ENCODE measurements at regions of chr6 and their contacts with region 1.

Region 1: DNA sequence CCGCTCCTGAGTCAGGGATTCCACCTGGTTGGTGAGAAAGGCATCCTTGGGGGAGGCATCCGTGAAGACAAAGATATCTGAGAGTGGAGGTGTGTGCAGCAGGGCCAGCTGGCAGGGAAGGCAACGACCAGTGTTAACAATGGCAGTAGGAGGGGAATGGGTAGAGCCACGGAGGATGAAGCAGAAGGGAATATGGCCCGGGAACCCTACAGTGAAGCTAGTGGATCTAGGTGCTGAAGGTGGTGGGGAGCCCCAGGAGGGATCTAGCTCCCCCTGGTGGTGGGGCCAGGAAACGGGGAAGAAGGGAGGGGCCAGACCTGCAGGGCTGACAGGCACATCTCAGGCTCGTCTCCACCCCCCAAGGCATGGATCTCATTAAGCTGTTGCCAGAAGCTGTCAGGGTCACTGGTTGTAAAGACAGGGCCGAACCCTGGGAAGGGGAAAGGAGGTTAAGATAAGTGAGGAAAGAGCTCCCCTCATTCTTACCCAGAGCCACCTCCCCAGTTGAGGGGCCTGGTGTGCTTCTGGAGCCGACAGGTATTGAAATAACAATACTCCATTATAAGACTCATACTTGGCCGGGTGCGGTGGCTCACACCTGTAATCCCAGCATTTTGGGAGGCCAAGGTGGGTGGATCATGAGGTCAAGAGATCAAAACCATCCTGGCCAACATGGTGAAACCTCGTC is 7.3 kb downstream of the VWA7 start:
- DNase-seq: peak; percentile 83 to 89 (median 88)
- ATAC-seq: peak; percentile 85 to 87 (median 87)
- H3K4me3 ChIP-seq: no peak overlapping the region
- H3K27ac ChIP-seq: no peak overlapping the region
- H3K4me1 ChIP-seq: peaks cover 0 to 5% (median 0%) of the 10 kb centered on the region in 4 donors
- H3K27me3 ChIP-seq: no peaks in the 10 kb centered on the region
- CTCF ChIP-seq: peak; percentile 81 to 98 (median 94)
- POLR2A ChIP-seq: no peak

Region 2: DNA sequence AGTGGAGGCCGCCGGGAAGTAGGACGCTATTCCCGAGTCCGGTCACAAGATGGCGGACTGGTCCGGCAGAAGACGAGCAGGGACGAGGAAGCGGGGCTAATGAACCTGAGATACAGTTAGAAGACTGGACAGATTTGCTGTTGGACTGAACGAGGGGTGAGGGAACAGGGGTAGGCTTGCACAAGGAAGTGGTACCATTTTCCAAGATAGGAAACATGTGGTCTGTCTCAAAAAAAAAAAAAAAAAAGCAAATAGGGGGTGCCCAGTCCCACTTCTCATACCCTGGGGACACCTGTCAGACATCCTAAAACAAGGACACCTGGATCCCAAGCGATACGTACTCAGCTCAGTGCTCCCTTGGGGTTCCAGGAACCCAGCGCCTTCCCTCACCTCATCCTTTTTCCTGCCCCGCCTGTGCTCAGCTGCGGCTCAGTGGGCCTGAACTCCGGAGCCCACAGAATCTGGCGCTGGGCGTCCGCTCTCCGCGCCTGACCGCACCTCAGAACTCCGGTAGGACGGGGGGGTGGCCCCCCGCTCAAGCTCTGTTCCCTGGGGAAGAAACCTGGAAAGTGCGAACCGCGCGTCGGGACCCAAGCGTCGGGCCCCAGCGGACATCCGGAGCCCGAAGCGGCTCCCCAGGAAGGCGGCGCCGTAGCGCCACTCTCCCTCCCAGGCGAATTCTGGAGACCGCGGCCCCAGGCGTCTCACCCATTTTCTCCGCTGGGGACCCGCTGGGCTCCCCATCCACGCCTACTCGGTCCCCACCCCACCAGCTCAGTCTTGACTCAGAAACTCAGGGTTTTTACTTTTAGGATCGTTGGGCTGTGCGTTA is 88.8 kb before region 1 on chr6 and contains the start of gene LY6G5C:
- intact Hi-C with region 1: loop called (anchors 10 kb)
- DNase-seq: peak; percentile 80 to 84 (median 82)
- ATAC-seq: peak; percentile 84 to 91 (median 86)
- H3K4me3 ChIP-seq: peak within 1 kb of the TSS; percentile 41 to 56 (median 53)
- H3K27ac ChIP-seq: peak within 1 kb of the TSS; percentile 26 to 64 (median 44)
- H3K4me1 ChIP-seq: peaks cover 0 to 16% (median 0%) of the 10 kb centered on the region in 4 donors
- H3K27me3 ChIP-seq: no peaks in the 10 kb centered on the region
- CTCF ChIP-seq: peak; percentile 67 to 75 (median 72)
- POLR2A ChIP-seq: no peak
- total RNA-seq, gene LY6G5C: 0.68 to 1.6 (median 1.2) TPM

Region 3: GRCh38 chr6:31712296-31712695 is 57.5 kb before region 1 on chr6:
- intact Hi-C with region 1: loop called in 1 of 2 experiments (anchors 10 kb)
- DNase-seq: no peak
- ATAC-seq: peak; percentile 55 to 75 (median 65)
- H3K4me3 ChIP-seq: no peak overlapping the region
- H3K27ac ChIP-seq: no peak overlapping the region
- H3K4me1 ChIP-seq: no peaks in the 10 kb centered on the region
- H3K27me3 ChIP-seq: no peaks in the 10 kb centered on the region
- CTCF ChIP-seq: peak in 3 of 4 donors; percentile 8 to 28 (median 27)
- POLR2A ChIP-seq: no peak

Region 4: DNA sequence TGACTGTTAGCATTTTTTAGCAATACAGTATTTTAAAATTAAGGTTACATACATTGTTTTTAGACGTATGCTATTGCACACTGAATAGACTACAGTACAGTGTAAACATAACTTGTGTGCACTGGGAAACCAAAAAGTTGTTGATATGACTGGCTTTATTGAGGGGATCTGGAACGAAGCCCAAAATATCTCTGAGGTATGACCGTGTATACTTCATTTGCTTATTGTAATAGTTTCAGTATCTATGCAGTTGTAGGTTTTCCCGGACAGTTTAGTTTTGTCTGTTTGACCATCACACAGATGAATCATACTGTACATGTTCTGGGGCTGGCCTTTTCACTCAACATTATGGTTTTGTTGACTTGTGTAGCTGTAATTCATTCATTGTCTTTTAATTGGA is 139.0 kb after region 1 on chr6:
- intact Hi-C with region 1: no loop called
- DNase-seq: no peak
- ATAC-seq: no peak
- H3K4me3 ChIP-seq: no peak overlapping the region
- H3K27ac ChIP-seq: no peak overlapping the region
- H3K4me1 ChIP-seq: peaks cover 0 to 8% (median 0%) of the 10 kb centered on the region in 4 donors
- H3K27me3 ChIP-seq: no peaks in the 10 kb centered on the region
- CTCF ChIP-seq: no peak
- POLR2A ChIP-seq: no peak